ENCODE measurements at regions of chr1 and their contacts with region 1.

Region 1: GRCh38 chr1:234509452-234510328 is 30.7 kb upstream of the TARBP1 start:
- DNase-seq: peak; percentile 84
- H3K4me3 Mint-ChIP-seq: peak overlapping the region; percentile 52
- H3K27ac Mint-ChIP-seq: peak overlapping the region; percentile 85
- H3K4me1 Mint-ChIP-seq: peaks cover 46% of the 10 kb centered on the region
- H3K27me3 Mint-ChIP-seq: no peaks in the 10 kb centered on the region
- CTCF ChIP-seq: no peak

Region 2: GRCh38 chr1:234458352-234459017 is 51.2 kb before region 1 on chr1:
- CTCF ChIA-PET with region 1: no interaction called
- POLR2A ChIA-PET with region 1: no interaction called
- intact Hi-C with region 1: no loop called
- DNase-seq: peak; percentile 49
- H3K4me3 Mint-ChIP-seq: no peak overlapping the region
- H3K27ac Mint-ChIP-seq: peak overlapping the region; percentile 28
- H3K4me1 Mint-ChIP-seq: no peaks in the 10 kb centered on the region
- H3K27me3 Mint-ChIP-seq: no peaks in the 10 kb centered on the region
- CTCF ChIP-seq: no peak

Region 3: GRCh38 chr1:234520908-234521806 is 11.5 kb after region 1 on chr1:
- CTCF ChIA-PET with region 1: interaction called, 9 read pairs
- POLR2A ChIA-PET with region 1: interaction called, 74 read pairs
- intact Hi-C with region 1: no loop called
- DNase-seq: no peak
- H3K4me3 Mint-ChIP-seq: no peak overlapping the region
- H3K27ac Mint-ChIP-seq: no peak overlapping the region
- H3K4me1 Mint-ChIP-seq: peaks cover 28% of the 10 kb centered on the region
- H3K27me3 Mint-ChIP-seq: no peaks in the 10 kb centered on the region
- CTCF ChIP-seq: no peak

Region 4: GRCh38 chr1:234528074-234528865 is 18.6 kb after region 1 on chr1:
- CTCF ChIA-PET with region 1: interaction called, 17 read pairs
- POLR2A ChIA-PET with region 1: interaction called, 443 read pairs
- intact Hi-C with region 1: no loop called
- DNase-seq: no peak
- H3K4me3 Mint-ChIP-seq: no peak overlapping the region
- H3K27ac Mint-ChIP-seq: no peak overlapping the region
- H3K4me1 Mint-ChIP-seq: peaks cover 28% of the 10 kb centered on the region
- H3K27me3 Mint-ChIP-seq: no peaks in the 10 kb centered on the region
- CTCF ChIP-seq: no peak